PC-3 (cell line): ENCODE measurements at regions of chr7 and their contacts with region 1.

Region 1: GRCh38 chr7:16420649-16421332 is 547 bp downstream of the CRPPA start:
- DNase-seq: peak; percentile 71
- ATAC-seq: peak; percentile 78
- H3K4me3 ChIP-seq: peak overlapping the region; percentile 71
- H3K27ac ChIP-seq: peak overlapping the region; percentile 83
- H3K4me1 ChIP-seq: peaks cover 43% of the 10 kb centered on the region
- H3K27me3 ChIP-seq: no peaks in the 10 kb centered on the region
- CTCF ChIP-seq: peak; percentile 38; the same call in 1 of the 2 replicates

Region 2: DNA sequence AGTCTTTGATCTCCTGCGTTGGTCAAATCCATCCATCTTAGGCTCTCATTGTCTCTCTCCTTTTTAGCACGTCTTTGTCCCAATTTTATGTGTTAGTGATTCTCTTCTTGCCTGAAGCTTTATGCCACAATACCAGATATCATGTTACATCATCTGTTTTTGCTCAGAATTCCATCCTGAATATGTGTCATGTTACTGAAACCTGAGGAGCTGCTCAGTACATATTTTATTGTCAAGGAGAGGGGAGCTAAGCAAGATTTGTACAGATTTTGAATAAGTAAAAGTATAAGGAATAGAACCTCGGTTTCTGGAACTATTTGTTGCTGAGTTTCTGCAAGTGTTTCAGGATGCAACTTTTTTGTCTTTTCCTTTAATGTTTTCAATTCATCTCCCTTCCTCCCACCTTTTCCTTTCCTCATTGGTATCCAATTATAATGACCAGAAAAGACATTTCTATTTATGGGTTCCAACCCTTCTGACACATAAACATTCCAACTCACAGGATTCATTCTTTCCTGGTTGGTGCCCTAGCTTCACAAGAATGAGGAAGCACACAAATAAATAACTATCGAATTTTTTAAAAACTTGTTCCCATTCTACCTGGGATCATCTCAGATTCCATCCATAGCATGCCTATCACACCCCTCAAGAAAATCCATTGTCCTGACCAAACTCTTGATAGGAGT is 291.2 kb before region 1 on chr7:
- CTCF ChIA-PET with region 1: no interaction called
- POLR2A ChIA-PET with region 1: interaction called, 45 read pairs
- intact Hi-C with region 1: no loop called
- DNase-seq: peak; percentile 86
- ATAC-seq: peak; percentile 96
- H3K4me3 ChIP-seq: peak overlapping the region; percentile 42; the same call in 1 of the 2 replicates
- H3K27ac ChIP-seq: peak overlapping the region; percentile 55
- H3K4me1 ChIP-seq: peaks cover 23% of the 10 kb centered on the region
- H3K27me3 ChIP-seq: no peaks in the 10 kb centered on the region
- CTCF ChIP-seq: no peak

Region 3: GRCh38 chr7:16242920-16243319 is 177.9 kb before region 1 on chr7:
- CTCF ChIA-PET with region 1: no interaction called
- POLR2A ChIA-PET with region 1: no interaction called
- intact Hi-C with region 1: loop called (anchors 10 kb)
- DNase-seq: no peak
- ATAC-seq: no peak
- H3K4me3 ChIP-seq: no peak overlapping the region
- H3K27ac ChIP-seq: no peak overlapping the region
- H3K4me1 ChIP-seq: 0 out of 2 replicates have a peak, but pooled peaks cover 4% of the 10 kb centered on the region
- H3K27me3 ChIP-seq: no peaks in the 10 kb centered on the region
- CTCF ChIP-seq: no peak

Region 4: DNA sequence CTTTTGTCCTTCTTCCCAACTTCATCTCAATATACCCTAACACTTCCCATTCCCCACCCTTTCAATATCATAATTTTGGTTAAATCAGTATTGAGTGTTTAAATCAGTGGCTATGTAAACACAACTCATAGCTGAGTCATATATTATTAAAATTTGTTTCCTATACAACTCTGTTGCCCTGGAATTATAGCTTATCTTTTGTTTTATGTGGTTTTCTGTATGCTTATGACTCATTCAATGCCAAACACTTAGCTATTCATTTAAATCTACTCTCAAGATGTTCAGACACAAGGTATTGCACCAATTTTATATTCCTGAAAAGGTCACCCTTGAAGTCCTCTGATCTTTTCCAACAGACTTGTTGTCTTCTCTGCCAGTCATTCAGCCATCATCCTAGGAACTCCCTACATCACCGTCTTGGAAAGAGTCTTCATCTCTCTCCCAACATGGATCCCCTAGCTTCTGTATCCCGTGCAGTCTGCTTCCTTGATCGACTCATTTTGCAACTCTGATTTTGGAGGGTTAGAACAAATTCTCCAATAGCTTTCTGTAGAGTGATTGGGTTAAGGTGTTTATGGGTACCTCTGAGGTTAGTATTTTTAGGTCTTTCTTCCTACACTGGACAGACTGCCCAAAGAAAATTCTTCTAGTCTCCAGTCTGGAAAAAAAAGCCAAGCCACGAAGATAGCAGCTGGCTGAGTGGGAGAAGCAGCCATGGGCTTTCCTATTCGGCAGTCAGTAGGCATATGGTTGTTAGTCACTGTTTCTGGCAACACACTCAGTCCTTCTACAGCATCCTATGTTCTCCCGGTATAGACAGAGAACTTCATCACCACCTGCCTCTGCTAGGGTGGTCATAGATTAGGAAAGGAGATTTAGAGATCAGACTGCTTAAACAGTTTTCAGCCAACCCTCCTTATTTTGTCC is 101.5 kb before region 1 on chr7:
- CTCF ChIA-PET with region 1: no interaction called
- POLR2A ChIA-PET with region 1: no interaction called
- intact Hi-C with region 1: loop called (anchors 5 kb)
- DNase-seq: peak; percentile 82
- ATAC-seq: peak; percentile 94
- H3K4me3 ChIP-seq: no peak overlapping the region
- H3K27ac ChIP-seq: peak overlapping the region; percentile 62
- H3K4me1 ChIP-seq: peaks cover 20% of the 10 kb centered on the region
- H3K27me3 ChIP-seq: no peaks in the 10 kb centered on the region
- CTCF ChIP-seq: no peak

Region 5: DNA sequence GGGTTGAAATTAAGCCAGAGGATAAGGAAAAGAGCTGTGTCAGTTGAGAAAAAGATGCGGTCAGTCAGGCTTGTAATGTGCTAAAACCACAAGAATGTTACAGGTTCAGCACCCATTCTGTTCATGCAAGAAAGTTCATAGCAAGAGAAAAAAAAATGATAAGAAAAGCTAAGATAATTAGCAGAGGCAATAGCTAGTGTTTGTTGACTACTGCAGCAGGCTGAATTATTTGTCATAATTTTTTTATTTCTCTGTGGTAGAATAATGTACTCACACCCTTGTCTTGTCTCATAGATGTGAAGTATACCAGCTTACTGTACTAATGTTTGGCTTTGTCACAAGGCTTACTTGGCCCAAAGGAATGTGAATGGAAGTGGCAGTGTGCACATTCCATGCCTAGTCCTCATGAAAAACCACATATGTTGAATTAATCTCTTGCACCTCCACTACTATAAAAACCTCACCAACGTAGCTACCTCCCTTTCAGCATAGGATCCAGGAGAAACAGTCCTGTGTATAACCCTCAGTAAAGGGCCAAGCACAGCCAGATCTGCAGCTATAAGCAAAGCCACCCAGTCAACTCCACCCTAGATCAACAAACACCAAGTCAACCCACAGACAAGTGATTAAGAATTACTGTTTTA is 74.3 kb before region 1 on chr7:
- CTCF ChIA-PET with region 1: no interaction called
- POLR2A ChIA-PET with region 1: interaction called, 7 read pairs
- intact Hi-C with region 1: loop called (anchors 2 kb)
- DNase-seq: peak; percentile 88
- ATAC-seq: peak; percentile 91
- H3K4me3 ChIP-seq: no peak overlapping the region; the same call in 1 of the 2 replicates
- H3K27ac ChIP-seq: peak overlapping the region; percentile 39
- H3K4me1 ChIP-seq: peaks cover 29% of the 10 kb centered on the region
- H3K27me3 ChIP-seq: no peaks in the 10 kb centered on the region
- CTCF ChIP-seq: no peak

Region 6: DNA sequence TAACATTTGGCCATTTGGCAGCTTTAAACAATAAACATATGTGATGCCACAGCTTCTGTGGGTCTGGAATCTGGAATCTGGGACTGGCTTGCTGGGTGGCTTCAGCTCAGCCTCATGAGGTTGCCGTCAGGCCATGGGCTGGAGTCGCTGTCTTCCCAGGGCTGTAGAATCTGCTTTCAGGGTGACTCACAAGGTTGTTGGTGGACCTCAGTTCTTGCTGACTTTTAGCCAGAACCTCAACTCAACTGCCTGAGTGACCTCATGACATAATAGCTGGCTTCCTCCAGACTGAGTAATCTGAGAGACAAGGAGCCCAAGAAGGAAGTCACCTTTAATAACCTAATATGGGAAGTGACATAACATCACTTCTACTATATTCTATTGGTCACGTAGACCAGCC is 288.2 kb after region 1 on chr7:
- CTCF ChIA-PET with region 1: no interaction called
- POLR2A ChIA-PET with region 1: no interaction called
- intact Hi-C with region 1: no loop called
- DNase-seq: peak; percentile 82
- ATAC-seq: peak; percentile 82
- H3K4me3 ChIP-seq: no peak overlapping the region
- H3K27ac ChIP-seq: peak overlapping the region; percentile 46
- H3K4me1 ChIP-seq: peaks cover 28% of the 10 kb centered on the region
- H3K27me3 ChIP-seq: no peaks in the 10 kb centered on the region
- CTCF ChIP-seq: 0 out of 2 replicates have a peak, but pooled peaks have one; percentile 8